Lower leg skin (tissue), 4 donors: ENCODE measurements at regions of chr20 and their contacts with region 1.

Region 1: GRCh38 chr20:3786665-3787323 is at the start of gene CENPB:
- DNase-seq: peak; percentile 82 to 98
- H3K4me3 ChIP-seq: peak within 1 kb of the TSS; percentile 44
- CTCF ChIP-seq: no peak
- POLR2A ChIP-seq: no peak
- total RNA-seq, gene CENPB: 94.4 to 109 (median 99.8) TPM

Region 2: GRCh38 chr20:3820048-3820900 is 33.5 kb after region 1 on chr20 and contains the start of gene AP5S1:
- intact Hi-C with region 1: loop called (anchors 2 kb)
- DNase-seq: peak; percentile 96 to 100
- H3K4me3 ChIP-seq: peak within 1 kb of the TSS; percentile 54
- CTCF ChIP-seq: peak in 1 of 3 donors; percentile 93
- POLR2A ChIP-seq: no peak
- total RNA-seq, gene AP5S1: 7.7 to 16.8 (median 10.5) TPM

Region 3: DNA sequence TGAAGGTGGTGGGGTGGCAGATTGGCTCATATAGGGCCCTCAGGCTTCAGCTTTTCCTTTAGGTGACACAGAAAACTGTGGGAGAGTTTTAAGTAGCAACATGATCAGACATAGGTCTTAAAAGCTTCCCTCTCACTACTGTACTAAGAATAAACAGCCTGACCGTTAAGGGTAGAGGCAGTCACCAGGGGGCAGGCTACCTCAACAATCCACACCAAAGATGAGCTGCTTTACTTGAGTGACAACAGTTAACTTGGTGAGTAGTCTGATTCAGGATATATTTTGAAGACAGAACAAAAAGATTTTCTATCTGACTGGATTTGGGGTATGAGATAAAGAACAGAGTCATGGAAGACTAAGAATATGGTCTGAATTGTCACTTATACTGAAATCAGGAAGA is 1770.3 kb after region 1 on chr20:
- intact Hi-C with region 1: no loop called
- DNase-seq: no peak
- H3K4me3 ChIP-seq: no peak overlapping the region
- CTCF ChIP-seq: no peak
- POLR2A ChIP-seq: no peak